CD8-positive, alpha-beta T cell (primary cell): ENCODE measurements at regions of chr11 and their contacts with region 1.

Region 1: DNA sequence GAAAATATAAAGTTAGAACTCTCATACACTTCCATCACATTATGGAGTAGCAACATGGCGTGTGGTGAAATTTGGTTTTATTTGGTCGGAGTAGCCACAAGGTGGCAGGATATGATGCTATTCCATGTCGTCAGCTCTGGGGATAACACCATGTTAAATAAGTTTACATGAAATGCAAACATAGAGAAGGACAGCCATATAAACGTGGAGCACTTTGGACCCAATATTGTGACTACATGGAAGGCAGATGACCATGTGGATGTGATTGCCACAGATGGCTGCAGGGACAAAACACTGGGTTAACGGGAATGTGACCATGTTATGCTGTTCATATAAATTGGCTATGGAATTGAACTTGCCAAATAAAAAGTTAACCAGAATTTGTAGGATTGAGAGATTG is 21.0 kb downstream of the OR5M11 start:
- DNase-seq: no peak
- ATAC-seq: no peak
- H3K4me3 ChIP-seq: no peak overlapping the region
- H3K4me3 Mint-ChIP-seq: no peak overlapping the region
- H3K27ac ChIP-seq: no peak overlapping the region
- H3K27ac Mint-ChIP-seq: no peak overlapping the region
- H3K4me1 ChIP-seq: no peaks in the 10 kb centered on the region
- H3K4me1 Mint-ChIP-seq: no peaks in the 10 kb centered on the region
- H3K27me3 ChIP-seq: no peaks in the 10 kb centered on the region
- H3K27me3 Mint-ChIP-seq: no peaks in the 10 kb centered on the region
- CTCF ChIP-seq: no peak

Region 2: GRCh38 chr11:56509439-56509838 is 12.6 kb before region 1 on chr11:
- CTCF ChIA-PET with region 1: no interaction called
- POLR2A ChIA-PET with region 1: no interaction called
- intact Hi-C with region 1: loop called in 1 of 2 experiments (anchors 2 kb)
- DNase-seq: no peak
- ATAC-seq: no peak
- H3K4me3 ChIP-seq: no peak overlapping the region
- H3K4me3 Mint-ChIP-seq: no peak overlapping the region
- H3K27ac ChIP-seq: no peak overlapping the region
- H3K27ac Mint-ChIP-seq: no peak overlapping the region
- H3K4me1 ChIP-seq: no peaks in the 10 kb centered on the region
- H3K4me1 Mint-ChIP-seq: no peaks in the 10 kb centered on the region
- H3K27me3 ChIP-seq: no peaks in the 10 kb centered on the region
- H3K27me3 Mint-ChIP-seq: no peaks in the 10 kb centered on the region
- CTCF ChIP-seq: no peak

Region 3: DNA sequence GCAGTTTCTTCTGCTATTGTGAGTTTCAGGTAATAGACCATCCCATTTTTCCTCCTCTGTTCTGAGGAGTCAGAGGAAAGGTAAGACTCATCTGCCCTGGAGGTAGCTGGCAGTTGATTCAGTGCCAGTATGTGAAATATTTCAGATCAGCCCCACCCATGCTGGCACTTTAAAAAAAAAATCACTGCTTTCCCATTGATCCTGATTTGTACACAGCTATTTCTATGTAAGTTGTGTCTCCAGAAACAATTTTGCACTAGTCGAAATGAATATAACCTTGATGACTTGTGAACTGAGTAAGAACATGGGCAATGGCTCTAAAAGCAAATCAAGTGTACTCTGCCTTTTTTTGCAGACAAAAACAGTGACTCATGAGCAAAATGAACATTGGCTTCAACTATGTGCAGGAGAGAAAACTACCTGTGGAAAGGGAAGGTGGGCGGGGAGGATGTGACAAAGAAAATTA is 384.7 kb after region 1 on chr11:
- CTCF ChIA-PET with region 1: no interaction called
- POLR2A ChIA-PET with region 1: no interaction called
- intact Hi-C with region 1: no loop called
- DNase-seq: no peak
- ATAC-seq: no peak
- H3K4me3 ChIP-seq: no peak overlapping the region
- H3K4me3 Mint-ChIP-seq: no peak overlapping the region
- H3K27ac ChIP-seq: no peak overlapping the region
- H3K27ac Mint-ChIP-seq: no peak overlapping the region
- H3K4me1 ChIP-seq: no peaks in the 10 kb centered on the region
- H3K4me1 Mint-ChIP-seq: no peaks in the 10 kb centered on the region
- H3K27me3 ChIP-seq: no peaks in the 10 kb centered on the region
- H3K27me3 Mint-ChIP-seq: no peaks in the 10 kb centered on the region
- CTCF ChIP-seq: no peak